ENCODE measurements at regions of chr13 and their contacts with region 1.

Region 1: GRCh38 chr13:50911937-50912795 is 2.6 kb downstream of the RNASEH2B start:
- DNase-seq: peak; percentile 82
- ATAC-seq: peak; percentile 58
- H3K4me3 Mint-ChIP-seq: peak overlapping the region; percentile 93
- H3K27ac Mint-ChIP-seq: peak overlapping the region; percentile 97
- H3K4me1 Mint-ChIP-seq: peaks cover 71% of the 10 kb centered on the region
- H3K27me3 Mint-ChIP-seq: no peaks in the 10 kb centered on the region
- CTCF ChIP-seq: no peak

Region 2: DNA sequence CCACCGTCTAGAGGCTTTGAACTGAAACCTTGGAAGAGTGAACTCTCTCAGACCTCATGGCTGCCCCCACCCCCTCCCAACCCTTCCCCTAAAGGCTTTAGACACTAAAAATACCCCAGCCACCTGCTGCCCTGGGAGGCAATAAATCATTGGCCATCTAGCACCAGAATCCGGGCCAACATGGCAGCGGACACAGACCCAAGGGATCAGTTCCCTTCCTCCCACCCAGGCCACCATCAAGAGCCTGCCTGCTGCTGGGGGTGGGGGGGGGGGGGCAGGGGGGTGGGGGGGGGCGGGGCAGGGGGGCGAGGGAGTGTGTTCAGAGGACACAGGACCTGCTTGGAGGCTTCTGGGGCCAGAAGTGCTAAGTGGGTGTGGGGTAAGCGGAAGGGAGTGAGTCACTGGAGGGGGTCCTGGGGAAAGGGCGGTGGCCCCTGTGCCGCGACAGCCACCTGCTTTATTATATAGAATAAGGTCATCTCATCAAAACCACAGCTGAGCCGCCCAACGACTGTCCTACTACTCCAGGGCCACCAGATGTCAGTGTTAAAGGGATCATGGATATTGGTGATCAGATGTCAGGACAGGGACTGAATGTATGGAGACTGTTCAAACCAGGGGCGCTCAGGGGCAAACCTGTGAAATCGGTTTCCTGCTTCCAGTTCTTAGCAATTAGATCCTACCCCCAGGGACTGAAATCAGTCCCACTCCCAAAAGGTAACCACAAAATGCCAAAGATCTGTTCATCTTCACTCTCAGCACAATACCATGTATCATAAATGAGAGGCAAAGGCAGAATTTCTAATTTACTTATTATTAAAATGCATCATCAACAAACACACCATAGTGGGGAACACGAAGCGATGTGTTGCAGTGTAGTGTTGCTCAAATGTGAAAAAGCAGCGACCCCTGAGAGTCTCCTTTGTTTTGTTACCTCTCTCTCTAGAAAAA is 1259.5 kb before region 1 on chr13:
- CTCF ChIA-PET with region 1: no interaction called
- POLR2A ChIA-PET with region 1: no interaction called
- intact Hi-C with region 1: loop called (anchors 10 kb)
- DNase-seq: no peak
- ATAC-seq: peak; percentile 78
- H3K4me3 Mint-ChIP-seq: no peak overlapping the region
- H3K27ac Mint-ChIP-seq: no peak overlapping the region
- H3K4me1 Mint-ChIP-seq: peaks cover 6% of the 10 kb centered on the region
- H3K27me3 Mint-ChIP-seq: no peaks in the 10 kb centered on the region
- CTCF ChIP-seq: no peak

Region 3: DNA sequence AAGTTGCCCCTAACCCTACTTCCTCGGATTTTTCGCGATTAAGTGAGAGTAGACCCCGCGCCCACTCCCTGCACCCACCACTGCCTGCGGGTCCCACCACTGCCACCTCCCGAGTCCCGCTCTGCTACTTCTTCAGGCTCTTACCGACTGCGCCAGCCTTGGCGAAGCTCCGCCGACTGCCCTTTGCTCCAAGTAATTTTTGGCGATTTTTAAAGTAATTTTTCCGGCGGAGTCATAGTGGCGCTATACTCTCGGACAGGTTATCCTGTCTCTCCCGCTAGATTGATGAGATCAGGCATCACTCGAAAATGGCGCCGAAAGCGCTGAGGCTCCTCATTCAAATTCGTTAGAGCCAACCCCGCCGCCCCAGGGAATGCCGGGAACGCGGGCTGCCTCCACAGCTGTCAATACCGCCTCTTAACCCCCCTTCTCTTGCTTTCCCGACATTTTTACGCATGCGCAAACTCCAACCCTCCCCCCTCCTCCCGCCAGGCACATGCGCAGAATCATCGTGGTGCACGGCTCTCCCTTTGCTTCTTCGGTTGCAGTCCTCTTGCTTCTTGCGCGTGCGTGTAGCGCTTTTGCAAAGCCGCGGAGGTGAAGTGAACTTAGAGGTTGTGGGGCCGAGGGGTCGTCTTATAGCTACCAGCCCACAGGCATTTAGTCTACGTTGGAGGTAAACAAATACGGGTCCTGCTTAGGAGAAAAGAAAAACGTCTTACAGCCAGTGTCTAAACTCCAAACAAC is 830.3 kb before region 1 on chr13:
- CTCF ChIA-PET with region 1: interaction called, 24 read pairs
- POLR2A ChIA-PET with region 1: interaction called, 47 read pairs
- intact Hi-C with region 1: loop called (anchors 1 kb)
- DNase-seq: peak; percentile 95
- ATAC-seq: peak; percentile 73
- H3K4me3 Mint-ChIP-seq: peak overlapping the region; percentile 100
- H3K27ac Mint-ChIP-seq: peak overlapping the region; percentile 100
- H3K4me1 Mint-ChIP-seq: peaks cover 62% of the 10 kb centered on the region
- H3K27me3 Mint-ChIP-seq: no peaks in the 10 kb centered on the region
- CTCF ChIP-seq: no peak

Region 4: GRCh38 chr13:50365408-50366391 is 546.5 kb before region 1 on chr13:
- CTCF ChIA-PET with region 1: interaction called, 8 read pairs
- POLR2A ChIA-PET with region 1: interaction called, 5 read pairs
- intact Hi-C with region 1: loop called (anchors 1 kb)
- DNase-seq: no peak
- ATAC-seq: peak; percentile 28
- H3K4me3 Mint-ChIP-seq: peak overlapping the region; percentile 63
- H3K27ac Mint-ChIP-seq: peak overlapping the region; percentile 86
- H3K4me1 Mint-ChIP-seq: peaks cover 57% of the 10 kb centered on the region
- H3K27me3 Mint-ChIP-seq: no peaks in the 10 kb centered on the region
- CTCF ChIP-seq: no peak

Region 5: DNA sequence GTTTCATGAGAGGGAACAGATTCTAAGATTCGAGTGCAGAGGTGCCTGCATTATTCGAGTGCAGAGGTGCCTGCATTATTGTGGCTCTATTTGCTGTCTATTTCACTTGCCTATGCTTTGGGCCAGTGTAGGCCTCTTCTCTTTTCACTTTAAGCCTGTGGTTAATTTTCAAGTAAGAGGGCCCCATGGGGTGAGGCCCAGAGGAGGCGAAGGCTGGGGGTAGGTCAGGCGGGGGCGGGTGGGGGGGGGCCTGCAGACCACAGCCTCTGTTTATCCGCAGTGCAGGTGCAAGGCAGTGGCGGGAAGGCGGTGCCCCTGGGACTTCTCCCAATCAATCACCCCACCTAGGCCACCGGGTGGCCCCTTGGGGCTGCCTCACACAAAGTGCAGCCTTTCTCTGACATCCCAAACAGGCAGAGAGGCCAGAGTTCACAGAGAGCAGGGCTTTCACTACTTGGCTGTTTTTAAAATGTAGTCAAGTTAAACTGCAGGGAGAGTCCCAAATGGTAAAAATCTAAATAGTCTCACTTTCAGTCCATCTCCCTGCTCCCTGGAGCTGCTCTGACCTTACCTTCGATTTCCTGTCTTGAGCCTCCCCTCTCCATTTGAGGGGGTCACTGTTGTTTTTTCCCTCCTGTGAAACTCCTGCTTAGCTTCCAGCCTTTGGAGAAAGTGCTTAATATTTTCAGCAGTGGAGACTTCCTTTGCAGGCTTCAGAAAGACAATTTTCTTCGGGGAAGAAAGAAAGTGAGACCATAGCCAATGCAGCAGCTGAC is 317.7 kb before region 1 on chr13:
- CTCF ChIA-PET with region 1: interaction called, 8 read pairs
- POLR2A ChIA-PET with region 1: interaction called, 15 read pairs
- intact Hi-C with region 1: loop called (anchors 1 kb)
- DNase-seq: peak; percentile 76
- ATAC-seq: peak; percentile 88
- H3K4me3 Mint-ChIP-seq: peak overlapping the region; percentile 73
- H3K27ac Mint-ChIP-seq: peak overlapping the region; percentile 98
- H3K4me1 Mint-ChIP-seq: peaks cover 95% of the 10 kb centered on the region
- H3K27me3 Mint-ChIP-seq: no peaks in the 10 kb centered on the region
- CTCF ChIP-seq: no peak

Region 6: DNA sequence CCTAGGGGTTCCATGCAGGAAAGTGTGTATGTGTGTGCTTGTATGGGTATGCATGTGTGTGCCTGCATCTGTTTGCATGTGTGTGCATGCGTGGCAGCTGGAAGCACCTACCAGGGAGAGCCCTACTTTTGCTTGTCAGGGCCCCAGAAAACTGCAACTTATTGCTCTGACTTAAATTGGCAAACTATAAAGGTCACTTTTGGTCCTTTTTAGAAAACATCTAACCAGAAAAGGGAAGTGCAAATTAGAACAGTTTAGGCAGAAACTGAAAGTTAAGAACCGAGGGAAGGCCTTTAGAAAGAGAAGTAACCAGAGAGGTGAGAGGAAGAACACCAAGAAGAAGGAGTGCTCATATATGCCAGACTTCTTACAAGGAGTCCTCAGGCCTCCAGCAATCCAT is 101.2 kb before region 1 on chr13:
- CTCF ChIA-PET with region 1: interaction called, 28 read pairs
- POLR2A ChIA-PET with region 1: interaction called, 23 read pairs
- intact Hi-C with region 1: loop called (anchors 1 kb)
- DNase-seq: no peak
- ATAC-seq: peak; percentile 93
- H3K4me3 Mint-ChIP-seq: peak overlapping the region; percentile 65
- H3K27ac Mint-ChIP-seq: peak overlapping the region; percentile 84
- H3K4me1 Mint-ChIP-seq: peaks cover 43% of the 10 kb centered on the region
- H3K27me3 Mint-ChIP-seq: no peaks in the 10 kb centered on the region
- CTCF ChIP-seq: no peak

Measured in activated B cell treated with CpG ODN at 0.5 μM for 24 hours (primary cell).